GM23248 (cell line): ENCODE measurements at regions of chr18 and their contacts with region 1.

Region 1: GRCh38 chr18:8389391-8390340 is 219.6 kb upstream of the RAB12 start:
- DNase-seq: peak; percentile 70
- H3K4me3 ChIP-seq: no peak overlapping the region
- H3K27ac ChIP-seq: no peak overlapping the region
- H3K4me1 ChIP-seq: no peaks in the 10 kb centered on the region
- H3K27me3 ChIP-seq: no peaks in the 10 kb centered on the region

Region 2: GRCh38 chr18:7259475-7260081 is 1130.1 kb before region 1 on chr18:
- in situ Hi-C with region 1: loop called (anchors 10 kb)
- DNase-seq: no peak
- H3K4me3 ChIP-seq: no peak overlapping the region
- H3K27ac ChIP-seq: no peak overlapping the region
- H3K4me1 ChIP-seq: no peaks in the 10 kb centered on the region
- H3K27me3 ChIP-seq: no peaks in the 10 kb centered on the region; the same call in 1 of the 2 replicates

Region 3: GRCh38 chr18:8277270-8277669 is 112.4 kb before region 1 on chr18:
- in situ Hi-C with region 1: no loop called
- DNase-seq: no peak
- H3K4me3 ChIP-seq: no peak overlapping the region
- H3K27ac ChIP-seq: no peak overlapping the region
- H3K4me1 ChIP-seq: no peaks in the 10 kb centered on the region
- H3K27me3 ChIP-seq: no peaks in the 10 kb centered on the region